HAP-1 (cell line): ENCODE measurements at regions of chr1 and their contacts with region 1.

Region 1: GRCh38 chr1:3624200-3625136 is at the start of gene TPRG1L:
- DNase-seq: peak; percentile 94 to 99
- H3K4me3 ChIP-seq: peak within 1 kb of the TSS; percentile 93
- H3K4me1 ChIP-seq: no peaks in the 10 kb centered on the region; the same call in 1 of the 2 replicates
- H3K27me3 ChIP-seq: no peaks in the 10 kb centered on the region

Region 2: GRCh38 chr1:3453203-3453761 is 171.2 kb before region 1 on chr1:
- in situ Hi-C with region 1: loop called (anchors 5 kb)
- DNase-seq: peak; percentile 49 to 88
- H3K4me3 ChIP-seq: no peak overlapping the region
- H3K4me1 ChIP-seq: peaks cover 5% of the 10 kb centered on the region; the same call in 1 of the 2 replicates
- H3K27me3 ChIP-seq: peaks cover 5% of the 10 kb centered on the region; the same call in 1 of the 2 replicates

Region 3: DNA sequence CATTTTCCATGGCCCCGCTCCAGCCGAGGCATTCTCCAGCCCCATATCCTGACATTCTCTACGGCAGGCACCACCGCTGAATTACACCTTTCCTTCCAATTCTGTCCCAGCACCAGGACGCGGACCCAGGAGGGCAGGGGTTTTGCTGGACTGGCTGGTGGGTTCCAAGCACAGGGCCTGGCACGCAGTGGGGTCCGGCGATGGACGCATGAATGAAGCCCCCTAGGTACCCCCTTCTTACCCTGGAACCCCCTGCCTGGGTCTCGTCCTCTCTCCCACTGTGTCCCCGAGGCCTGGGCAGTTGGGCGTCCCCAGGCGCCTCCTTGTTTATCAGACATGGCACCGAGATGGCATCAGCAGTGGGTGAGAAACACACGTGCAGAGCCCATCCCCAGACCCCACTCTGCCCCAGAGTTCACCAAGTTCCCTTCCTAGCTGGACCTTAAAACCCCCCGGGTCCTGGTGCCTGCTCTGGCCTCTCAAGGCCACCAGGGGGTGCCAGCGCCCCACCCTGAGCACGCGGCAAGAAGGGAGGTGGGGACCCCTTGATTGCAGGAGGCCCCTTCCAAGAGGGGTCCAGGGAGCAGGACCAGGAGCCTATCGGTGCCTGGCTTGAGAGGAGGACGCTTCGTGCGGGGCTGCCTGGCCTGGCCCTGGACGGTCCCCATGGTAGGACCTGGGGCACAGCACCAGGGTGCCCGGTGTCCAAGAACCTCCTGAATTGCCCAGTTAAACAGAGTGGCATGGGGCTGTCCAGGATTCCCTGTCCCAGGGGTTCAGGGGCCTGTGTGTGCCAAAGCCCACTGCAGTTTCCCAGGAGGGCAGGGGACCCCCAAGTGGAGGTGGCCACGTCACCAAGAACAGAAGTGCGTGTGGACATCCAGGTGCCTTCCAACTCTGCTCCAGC is 59.3 kb before region 1 on chr1:
- in situ Hi-C with region 1: loop called (anchors 5 kb)
- DNase-seq: peak; percentile 5 to 56
- H3K4me3 ChIP-seq: no peak overlapping the region
- H3K4me1 ChIP-seq: no peaks in the 10 kb centered on the region
- H3K27me3 ChIP-seq: no peaks in the 10 kb centered on the region

Region 4: DNA sequence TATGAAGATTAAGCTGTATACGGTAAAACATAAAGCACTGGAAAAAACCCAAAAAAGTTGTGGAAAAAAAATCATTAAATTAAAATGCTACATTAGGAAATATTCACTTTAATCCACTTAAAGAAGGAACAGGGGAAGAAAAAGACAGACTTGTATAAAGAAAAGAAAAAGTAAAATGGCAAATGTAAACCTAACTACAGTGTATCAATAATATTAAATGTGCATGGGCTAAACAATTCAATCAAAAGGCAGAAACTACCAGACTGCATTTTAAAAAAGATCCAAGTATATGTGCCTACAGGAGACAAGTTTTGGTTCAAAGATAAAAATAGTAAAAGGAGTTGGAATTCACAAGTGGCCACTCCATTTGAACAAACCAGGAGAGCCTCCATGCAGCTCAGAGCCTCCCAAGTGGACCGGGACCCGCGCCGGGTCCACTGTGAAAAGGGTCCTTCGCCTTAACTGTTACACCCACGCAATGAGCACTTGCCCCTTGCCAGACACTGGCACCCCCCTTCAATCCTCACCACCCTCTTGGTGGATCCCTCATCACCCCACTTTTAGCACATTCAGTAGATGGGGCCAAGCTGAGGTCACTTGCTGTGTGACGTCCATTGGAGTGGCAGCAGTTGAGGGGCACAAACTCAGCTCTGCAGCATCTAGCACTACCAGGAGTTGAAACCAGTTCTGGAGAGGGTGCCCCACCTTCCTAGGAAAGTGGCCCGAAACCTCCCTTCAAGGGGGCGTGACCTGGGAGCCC is 274.7 kb after region 1 on chr1:
- in situ Hi-C with region 1: no loop called
- DNase-seq: peak; percentile 5 to 36
- H3K4me3 ChIP-seq: peak overlapping the region; percentile 94
- H3K4me1 ChIP-seq: peaks cover 2% of the 10 kb centered on the region; the same call in 1 of the 2 replicates
- H3K27me3 ChIP-seq: no peaks in the 10 kb centered on the region